ENCODE measurements at regions of chr7 and their contacts with region 1.

Region 1: DNA sequence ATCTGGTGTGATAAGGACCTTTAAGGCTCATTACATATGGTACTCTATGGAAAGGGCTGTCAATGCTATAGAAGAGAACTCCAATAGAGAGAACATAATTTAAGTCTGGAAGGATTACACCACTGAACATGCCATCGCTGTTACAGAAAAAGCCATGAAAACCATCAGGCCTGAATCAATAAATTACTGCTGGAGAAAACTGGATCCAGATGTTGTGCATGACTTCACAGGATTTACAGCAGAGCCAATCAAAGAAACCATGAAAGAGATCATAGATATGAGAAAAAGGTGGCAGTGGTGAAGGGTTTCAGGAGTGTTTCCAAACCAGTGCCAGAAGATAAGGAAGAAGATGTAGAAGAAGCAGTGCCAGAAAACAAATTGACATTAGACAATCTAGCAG is 18.9 kb upstream of the GPR22 start:
- DNase-seq: no peak
- H3K4me3 Mint-ChIP-seq: no peak overlapping the region
- H3K27ac Mint-ChIP-seq: no peak overlapping the region
- H3K4me1 Mint-ChIP-seq: peaks cover 11% of the 10 kb centered on the region
- H3K27me3 Mint-ChIP-seq: no peaks in the 10 kb centered on the region

Region 2: DNA sequence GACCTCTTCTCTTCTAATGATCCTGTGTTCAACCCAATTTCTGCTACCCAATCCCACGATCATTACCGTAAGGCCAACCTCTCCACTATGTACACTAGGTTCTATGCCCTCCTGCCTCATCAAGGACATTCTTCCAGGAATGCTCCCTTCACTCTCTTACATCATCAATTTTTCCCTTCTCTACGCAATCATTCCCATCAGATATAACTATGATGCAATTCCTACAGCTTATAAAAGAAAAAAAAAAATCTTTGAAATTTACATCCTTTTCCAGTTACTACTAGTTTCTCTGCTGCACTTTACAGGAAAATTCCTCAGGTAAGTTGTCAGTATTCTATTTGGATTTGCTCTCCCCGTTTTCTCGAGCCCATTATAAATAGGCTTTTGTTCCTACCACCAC is 11.9 kb before region 1 on chr7:
- CTCF ChIA-PET with region 1: no interaction called
- POLR2A ChIA-PET with region 1: no interaction called
- DNase-seq: no peak
- H3K4me3 Mint-ChIP-seq: no peak overlapping the region
- H3K27ac Mint-ChIP-seq: no peak overlapping the region
- H3K4me1 Mint-ChIP-seq: peaks cover 2% of the 10 kb centered on the region
- H3K27me3 Mint-ChIP-seq: no peaks in the 10 kb centered on the region

Region 3: GRCh38 chr7:107467972-107468371 is 17.0 kb after region 1 on chr7:
- CTCF ChIA-PET with region 1: no interaction called
- POLR2A ChIA-PET with region 1: interaction called, 13 read pairs
- DNase-seq: no peak
- H3K4me3 Mint-ChIP-seq: no peak overlapping the region
- H3K27ac Mint-ChIP-seq: no peak overlapping the region
- H3K4me1 Mint-ChIP-seq: no peaks in the 10 kb centered on the region
- H3K27me3 Mint-ChIP-seq: no peaks in the 10 kb centered on the region